ENCODE measurements at regions of chr2 and their contacts with region 1.

Region 1: GRCh38 chr2:176638167-176639015 is 369.1 kb downstream of the MTX2 start:
- DNase-seq: peak; percentile 68 to 69
- ATAC-seq: peak; percentile 92 to 96
- H3K4me3 ChIP-seq: peak overlapping the region; percentile 66
- H3K27ac ChIP-seq: peak overlapping the region; percentile 88 to 95
- H3K4me1 ChIP-seq: peaks cover 11% of the 10 kb centered on the region; the same call in 2 of the 3 replicates
- CTCF ChIP-seq: peak; percentile 96
- EP300 ChIP-seq: no peak
- POLR2A ChIP-seq: no peak
- RAD21 ChIP-seq: peak; percentile 87 to 98

Region 2: GRCh38 chr2:176126929-176127773 is 511.2 kb before region 1 on chr2:
- CTCF ChIA-PET with region 1: interaction called, 139 read pairs
- POLR2A ChIA-PET with region 1: no interaction called
- DNase-seq: peak in 1 of 2 experiments; percentile 52
- ATAC-seq: 0 out of 6 replicates have a peak, but pooled peaks of 1 of the 2 experiments have one; percentile 10
- H3K4me3 ChIP-seq: no peak overlapping the region
- H3K27ac ChIP-seq: no peak overlapping the region
- H3K4me1 ChIP-seq: 0 out of 3 replicates have a peak, but pooled peaks cover 3% of the 10 kb centered on the region
- CTCF ChIP-seq: peak; percentile 96
- EP300 ChIP-seq: no peak
- POLR2A ChIP-seq: no peak
- RAD21 ChIP-seq: peak; percentile 87 to 91

Region 3: DNA sequence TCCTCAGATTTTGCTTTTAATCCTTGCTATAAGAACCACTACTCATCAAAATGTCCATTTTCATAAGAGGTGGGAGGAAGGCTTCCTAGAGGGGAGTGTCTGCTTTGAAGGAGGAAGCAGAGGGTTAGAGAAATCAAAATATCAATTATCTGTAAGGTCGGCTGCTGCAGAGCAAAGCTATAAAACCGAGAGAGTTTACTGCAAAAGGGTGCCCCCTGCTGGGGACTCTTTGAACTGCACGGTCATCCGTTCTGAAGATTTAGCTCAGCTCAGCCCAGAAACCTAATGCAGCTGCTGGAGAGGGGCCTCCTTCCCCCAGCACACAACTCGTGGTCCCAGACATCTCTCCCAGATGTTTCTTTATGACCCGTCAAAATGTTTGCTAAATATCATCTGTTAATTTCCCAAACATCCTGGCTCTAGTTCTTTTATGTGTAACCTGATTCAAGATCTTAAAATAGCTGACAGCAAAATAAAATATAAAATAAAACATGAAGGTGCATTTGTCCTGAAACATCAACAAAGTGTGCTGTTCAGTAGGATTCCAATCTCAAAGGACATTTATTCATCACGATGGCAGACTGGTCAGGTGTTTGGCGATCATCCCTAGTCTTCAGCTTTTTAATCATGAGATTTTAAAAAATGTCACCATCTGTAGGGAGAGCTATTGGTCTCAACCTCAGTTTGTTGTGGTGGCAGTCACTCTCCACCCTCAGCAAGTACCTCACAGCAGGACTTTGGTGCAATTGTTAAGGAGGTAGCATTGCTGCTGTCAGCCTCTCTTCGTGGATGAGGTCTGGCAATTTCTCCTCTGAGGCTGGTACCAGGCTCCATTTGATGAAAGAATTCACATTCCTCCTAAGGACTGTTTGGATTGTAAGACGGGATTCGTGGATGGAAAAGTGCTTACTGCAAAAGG is 183.2 kb before region 1 on chr2:
- CTCF ChIA-PET with region 1: interaction called, 32 read pairs
- POLR2A ChIA-PET with region 1: no interaction called
- DNase-seq: peak; percentile 31 to 59
- ATAC-seq: peak; percentile 87 to 93
- H3K4me3 ChIP-seq: no peak overlapping the region
- H3K27ac ChIP-seq: no peak overlapping the region
- H3K4me1 ChIP-seq: no peaks in the 10 kb centered on the region
- CTCF ChIP-seq: peak; percentile 90
- EP300 ChIP-seq: no peak
- POLR2A ChIP-seq: no peak
- RAD21 ChIP-seq: peak; percentile 83 to 86

Region 4: DNA sequence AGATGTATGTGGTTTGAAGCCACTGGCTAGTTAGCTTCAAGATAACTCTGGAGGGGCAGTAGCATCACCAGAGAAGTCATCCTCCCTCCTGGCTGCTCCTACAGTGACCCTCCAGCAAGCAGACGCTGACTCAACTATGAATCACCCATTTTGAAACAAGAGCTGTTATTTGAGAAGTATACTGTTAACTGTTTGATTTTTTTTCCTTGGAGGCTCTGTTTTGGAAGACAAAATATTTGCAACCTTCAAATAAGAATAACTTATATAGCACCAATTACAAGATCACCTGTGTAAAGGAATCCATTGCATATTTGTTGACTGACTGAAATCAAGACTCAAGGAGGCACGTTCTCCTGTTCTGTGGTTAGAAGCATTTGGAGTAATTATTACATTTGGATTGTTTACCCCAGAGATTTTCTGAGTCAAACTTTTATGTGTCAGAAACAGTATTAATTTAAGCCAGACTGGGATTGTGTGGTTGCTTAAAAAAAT is 55.4 kb before region 1 on chr2:
- CTCF ChIA-PET with region 1: interaction called, 10 read pairs
- POLR2A ChIA-PET with region 1: interaction called, 12 read pairs
- DNase-seq: peak; percentile 49 to 87
- ATAC-seq: peak; percentile 95 to 97
- H3K4me3 ChIP-seq: peak overlapping the region; percentile 17; the same call in 1 of the 3 replicates
- H3K27ac ChIP-seq: peak overlapping the region; percentile 72 to 76
- H3K4me1 ChIP-seq: peaks cover 31% of the 10 kb centered on the region
- CTCF ChIP-seq: no peak
- EP300 ChIP-seq: no peak
- POLR2A ChIP-seq: no peak
- RAD21 ChIP-seq: peak in 1 of 2 experiments; percentile 23; a peak in 2 of 5 replicates

Region 5: GRCh38 chr2:176626796-176627195 is 11.6 kb before region 1 on chr2:
- CTCF ChIA-PET with region 1: interaction called, 13 read pairs
- POLR2A ChIA-PET with region 1: no interaction called
- DNase-seq: no peak
- ATAC-seq: 0 out of 6 replicates have a peak, but pooled peaks of 1 of the 2 experiments have one; percentile 34
- H3K4me3 ChIP-seq: no peak overlapping the region
- H3K27ac ChIP-seq: no peak overlapping the region
- H3K4me1 ChIP-seq: no peaks in the 10 kb centered on the region
- CTCF ChIP-seq: no peak
- EP300 ChIP-seq: no peak
- POLR2A ChIP-seq: no peak
- RAD21 ChIP-seq: no peak

Region 6: GRCh38 chr2:176709149-176709951 is 71.0 kb after region 1 on chr2:
- CTCF ChIA-PET with region 1: no interaction called
- POLR2A ChIA-PET with region 1: no interaction called
- DNase-seq: no peak
- ATAC-seq: no peak; a peak in 1 of 6 replicates
- H3K4me3 ChIP-seq: no peak overlapping the region
- H3K27ac ChIP-seq: no peak overlapping the region
- H3K4me1 ChIP-seq: no peaks in the 10 kb centered on the region
- CTCF ChIP-seq: no peak
- EP300 ChIP-seq: no peak
- POLR2A ChIP-seq: no peak
- RAD21 ChIP-seq: no peak

Region 7: GRCh38 chr2:176832086-176832485 is 193.7 kb after region 1 on chr2:
- CTCF ChIA-PET with region 1: no interaction called
- POLR2A ChIA-PET with region 1: no interaction called
- DNase-seq: no peak
- ATAC-seq: no peak
- H3K4me3 ChIP-seq: no peak overlapping the region
- H3K27ac ChIP-seq: no peak overlapping the region
- H3K4me1 ChIP-seq: no peaks in the 10 kb centered on the region
- CTCF ChIP-seq: no peak
- EP300 ChIP-seq: no peak
- POLR2A ChIP-seq: no peak
- RAD21 ChIP-seq: no peak

Region 8: DNA sequence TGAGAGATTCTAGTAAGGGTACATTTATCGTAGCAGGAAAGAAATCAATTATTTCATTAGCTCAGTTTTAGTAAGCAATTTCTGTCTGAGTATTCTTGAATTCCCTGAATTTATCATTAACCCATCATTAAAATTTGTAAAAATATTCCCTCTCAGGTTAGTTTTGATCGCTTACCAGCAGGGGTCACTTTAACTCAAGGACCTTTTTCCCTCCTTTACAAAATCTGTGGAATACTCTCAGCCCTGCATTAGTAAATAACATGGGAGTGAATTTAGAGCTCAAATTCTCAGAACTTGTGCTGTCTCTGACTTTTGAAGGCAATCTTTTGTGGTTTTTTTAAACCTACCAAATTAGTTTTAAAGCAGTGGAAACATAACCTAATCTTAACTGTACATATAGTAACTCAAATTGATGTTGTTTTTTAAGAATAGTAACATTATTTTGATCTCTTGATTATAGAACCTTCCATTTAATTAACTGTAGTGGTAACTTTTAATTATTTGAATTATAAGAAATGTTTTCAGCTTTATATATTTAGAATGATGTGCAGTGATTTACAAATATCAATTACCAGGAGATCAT is 851.4 kb after region 1 on chr2:
- CTCF ChIA-PET with region 1: no interaction called
- POLR2A ChIA-PET with region 1: no interaction called
- DNase-seq: peak; percentile 15 to 42
- ATAC-seq: peak in 1 of 2 experiments; percentile 75; a peak in 3 of 6 replicates
- H3K4me3 ChIP-seq: no peak overlapping the region
- H3K27ac ChIP-seq: no peak overlapping the region
- H3K4me1 ChIP-seq: no peaks in the 10 kb centered on the region
- CTCF ChIP-seq: peak; percentile 75
- EP300 ChIP-seq: no peak
- POLR2A ChIP-seq: no peak
- RAD21 ChIP-seq: peak; percentile 56